ENCODE measurements at regions of chr11 and their contacts with region 1.

Region 1: GRCh38 chr11:4187055-4187988 is 92.7 kb downstream of the RRM1 start:
- DNase-seq: peak; percentile 52
- ATAC-seq: peak; percentile 94
- H3K4me3 ChIP-seq: peak overlapping the region; percentile 58 to 66
- H3K27ac ChIP-seq: 0 out of 2 replicates have a peak overlapping the region, but pooled peaks have one; percentile 25
- H3K4me1 ChIP-seq: no peaks in the 10 kb centered on the region
- H3K27me3 ChIP-seq: peaks cover 6% of the 10 kb centered on the region; the same call in 1 of the 2 replicates
- CTCF ChIP-seq: peak; percentile 99

Region 2: GRCh38 chr11:4065601-4066377 is 121.5 kb before region 1 on chr11:
- CTCF ChIA-PET with region 1: no interaction called
- POLR2A ChIA-PET with region 1: no interaction called
- in situ Hi-C with region 1: no loop called
- intact Hi-C with region 1: no loop called
- DNase-seq: no peak
- ATAC-seq: no peak
- H3K4me3 ChIP-seq: no peak overlapping the region
- H3K27ac ChIP-seq: no peak overlapping the region
- H3K4me1 ChIP-seq: no peaks in the 10 kb centered on the region
- H3K27me3 ChIP-seq: no peaks in the 10 kb centered on the region
- CTCF ChIP-seq: no peak

Region 3: DNA sequence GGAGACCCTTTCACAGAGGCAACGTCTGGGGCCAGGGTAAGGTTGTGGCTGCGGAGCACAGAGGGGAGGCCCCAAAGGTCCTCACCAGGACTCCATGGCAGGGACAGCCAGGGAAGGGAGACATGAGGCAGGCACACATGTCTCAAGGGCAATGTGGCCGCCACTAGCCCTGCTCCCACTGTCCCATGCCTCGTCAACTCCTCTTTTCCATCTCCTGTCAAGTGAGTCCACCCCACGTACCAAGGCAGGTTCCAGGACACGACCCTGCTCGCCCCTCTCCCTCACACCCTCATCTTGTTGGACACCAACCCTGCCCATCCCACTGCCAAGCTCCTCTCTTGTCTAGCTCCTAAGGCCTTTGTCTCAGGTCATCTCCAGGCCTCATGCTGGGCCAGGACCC is 19.6 kb before region 1 on chr11:
- CTCF ChIA-PET with region 1: no interaction called
- POLR2A ChIA-PET with region 1: no interaction called
- in situ Hi-C with region 1: no loop called
- intact Hi-C with region 1: no loop called
- DNase-seq: no peak
- ATAC-seq: peak; percentile 30; the same call in 1 of the 2 replicates
- H3K4me3 ChIP-seq: no peak overlapping the region
- H3K27ac ChIP-seq: no peak overlapping the region
- H3K4me1 ChIP-seq: no peaks in the 10 kb centered on the region
- H3K27me3 ChIP-seq: no peaks in the 10 kb centered on the region
- CTCF ChIP-seq: no peak

Region 4: GRCh38 chr11:4393209-4393857 is 206.0 kb after region 1 on chr11 and contains the start of gene TRIM21:
- CTCF ChIA-PET with region 1: no interaction called
- POLR2A ChIA-PET with region 1: no interaction called
- in situ Hi-C with region 1: no loop called
- intact Hi-C with region 1: no loop called
- DNase-seq: peak; percentile 83
- ATAC-seq: peak; percentile 100
- H3K4me3 ChIP-seq: peak within 1 kb of the TSS; percentile 81 to 91
- H3K27ac ChIP-seq: peak within 1 kb of the TSS; percentile 90
- H3K4me1 ChIP-seq: peaks cover 7% of the 10 kb centered on the region
- H3K27me3 ChIP-seq: no peaks in the 10 kb centered on the region
- CTCF ChIP-seq: no peak
- total RNA-seq, gene TRIM21: 31.7 TPM

Region 5: GRCh38 chr11:4493480-4493818 is 306.1 kb after region 1 on chr11:
- CTCF ChIA-PET with region 1: interaction called, 38 read pairs
- POLR2A ChIA-PET with region 1: no interaction called
- in situ Hi-C with region 1: no loop called
- intact Hi-C with region 1: loop called (anchors 1 kb)
- DNase-seq: no peak
- ATAC-seq: no peak
- H3K4me3 ChIP-seq: no peak overlapping the region
- H3K27ac ChIP-seq: no peak overlapping the region
- H3K4me1 ChIP-seq: no peaks in the 10 kb centered on the region
- H3K27me3 ChIP-seq: peaks cover 21% of the 10 kb centered on the region
- CTCF ChIP-seq: peak; percentile 74

Region 6: GRCh38 chr11:4539603-4540219 is 352.4 kb after region 1 on chr11:
- CTCF ChIA-PET with region 1: interaction called, 25 read pairs
- POLR2A ChIA-PET with region 1: no interaction called
- in situ Hi-C with region 1: no loop called
- intact Hi-C with region 1: loop called (anchors 1 kb)
- DNase-seq: peak; percentile 17
- ATAC-seq: peak; percentile 96
- H3K4me3 ChIP-seq: no peak overlapping the region
- H3K27ac ChIP-seq: no peak overlapping the region
- H3K4me1 ChIP-seq: no peaks in the 10 kb centered on the region
- H3K27me3 ChIP-seq: peaks cover 5% of the 10 kb centered on the region
- CTCF ChIP-seq: peak; percentile 86

Region 7: DNA sequence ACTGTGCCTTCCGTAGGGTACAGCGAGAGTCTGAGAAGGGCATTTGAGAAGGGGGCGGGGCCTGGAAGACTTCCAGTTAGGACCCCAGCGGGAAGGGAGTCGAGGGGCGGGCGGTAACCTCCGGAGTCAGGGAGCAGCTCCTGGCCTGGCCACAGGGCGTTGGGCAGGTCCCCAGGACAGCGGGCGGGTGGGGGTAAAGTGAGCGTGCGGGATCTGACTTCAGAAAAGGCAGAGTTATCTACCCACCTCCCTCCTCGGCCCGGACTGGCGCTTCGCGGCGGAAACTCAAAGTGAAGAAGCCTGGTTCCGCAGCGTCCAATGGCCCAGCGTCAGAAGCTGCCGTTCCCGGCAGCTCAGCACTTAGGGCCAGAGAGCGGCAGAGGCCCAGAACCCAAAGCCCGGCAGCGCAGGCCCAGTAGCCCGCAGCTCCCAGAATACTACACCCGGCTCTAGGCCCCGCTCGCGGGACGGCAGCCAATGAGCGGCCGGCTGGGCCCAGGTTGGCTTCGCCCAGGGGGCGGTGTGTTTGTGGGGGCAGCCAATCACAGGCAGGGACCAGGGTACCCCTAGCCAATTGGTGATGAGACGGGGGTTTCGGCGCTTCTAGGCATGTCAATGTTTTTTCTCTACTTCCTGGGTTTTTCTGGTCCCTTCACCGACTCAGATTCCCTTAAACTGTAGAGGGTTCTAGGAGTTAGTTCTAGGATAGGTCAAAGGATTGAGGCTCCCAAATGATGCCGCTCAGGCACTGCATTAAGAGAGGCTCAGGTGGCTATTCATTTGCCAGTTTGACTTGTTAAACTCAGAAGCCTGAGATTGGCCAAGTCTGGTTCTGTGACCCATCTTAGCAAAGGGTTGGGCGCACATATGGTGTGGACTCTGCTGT is 420.7 kb after region 1 on chr11 and contains the start of gene TRIM68:
- CTCF ChIA-PET with region 1: no interaction called
- POLR2A ChIA-PET with region 1: no interaction called
- in situ Hi-C with region 1: no loop called
- intact Hi-C with region 1: loop called (anchors 10 kb)
- DNase-seq: peak; percentile 85
- ATAC-seq: peak; percentile 100
- H3K4me3 ChIP-seq: peak within 1 kb of the TSS; percentile 67 to 79
- H3K27ac ChIP-seq: peak within 1 kb of the TSS; percentile 80
- H3K4me1 ChIP-seq: peaks cover 10% of the 10 kb centered on the region; the same call in 1 of the 2 replicates
- H3K27me3 ChIP-seq: no peaks in the 10 kb centered on the region; the same call in 1 of the 2 replicates
- CTCF ChIP-seq: no peak
- total RNA-seq, gene TRIM68: 18.5 TPM

Region 8: DNA sequence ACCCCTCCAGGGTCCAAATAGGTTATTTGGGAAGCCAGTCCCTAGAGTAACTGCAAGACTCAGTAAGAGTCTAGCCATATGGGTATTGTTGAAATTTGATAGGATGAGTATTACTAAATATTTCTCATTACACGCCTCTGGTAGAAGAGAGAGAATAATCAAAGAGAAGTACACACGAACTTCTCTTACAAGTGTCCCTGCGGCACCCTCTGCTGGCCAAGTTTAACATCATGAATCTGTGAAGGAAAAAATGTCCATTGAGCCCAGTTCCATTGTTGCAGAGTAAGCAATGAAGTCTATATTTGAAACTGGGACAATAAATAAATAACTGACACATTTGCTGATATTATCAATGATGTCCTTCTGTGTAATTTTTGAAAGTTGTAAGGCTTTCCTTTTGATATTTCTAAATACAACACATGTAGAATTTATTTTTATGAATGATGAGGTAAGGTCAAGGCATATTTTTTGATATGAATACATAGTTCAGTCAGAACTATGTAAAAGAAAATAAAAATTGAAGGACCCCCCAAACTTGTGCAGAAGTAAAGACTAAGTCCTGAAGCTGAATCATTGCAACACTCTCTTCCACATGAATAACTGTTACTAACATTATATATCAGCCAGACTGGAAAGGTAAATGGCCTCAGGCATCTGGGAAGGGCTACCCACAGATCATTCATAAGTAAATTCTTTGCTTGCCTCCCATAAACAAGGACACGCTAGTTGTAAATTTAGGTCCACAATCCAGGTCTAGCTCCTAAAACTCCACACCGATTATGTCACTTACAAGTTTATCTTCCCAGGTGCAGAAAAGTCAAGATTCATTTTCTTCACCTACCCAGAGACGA is 817.3 kb after region 1 on chr11:
- CTCF ChIA-PET with region 1: no interaction called
- POLR2A ChIA-PET with region 1: no interaction called
- in situ Hi-C with region 1: no loop called
- intact Hi-C with region 1: loop called (anchors 10 kb)
- DNase-seq: peak; percentile 52
- ATAC-seq: peak; percentile 83
- H3K4me3 ChIP-seq: no peak overlapping the region
- H3K27ac ChIP-seq: no peak overlapping the region
- H3K4me1 ChIP-seq: no peaks in the 10 kb centered on the region
- H3K27me3 ChIP-seq: no peaks in the 10 kb centered on the region; the same call in 1 of the 2 replicates
- CTCF ChIP-seq: peak; percentile 81

Region 9: DNA sequence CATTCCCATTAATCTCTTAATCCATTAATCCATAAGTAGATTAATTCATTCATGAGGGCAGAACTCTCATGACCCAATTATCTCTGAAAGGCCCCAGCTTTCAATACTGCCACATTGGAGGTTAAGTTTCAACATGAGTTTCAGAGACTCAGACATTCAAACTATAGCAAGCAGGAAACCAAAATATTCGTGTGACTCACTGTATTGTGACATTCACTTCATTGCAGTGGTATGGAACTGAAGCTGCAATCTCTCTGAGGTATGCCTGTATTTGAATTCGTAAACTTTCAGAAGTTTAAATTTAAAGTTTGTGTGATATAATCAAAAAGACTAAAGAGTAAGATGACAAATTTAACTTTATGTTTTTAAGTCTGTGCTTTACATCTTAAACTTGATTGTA is 856.1 kb after region 1 on chr11:
- CTCF ChIA-PET with region 1: no interaction called
- POLR2A ChIA-PET with region 1: no interaction called
- in situ Hi-C with region 1: no loop called
- intact Hi-C with region 1: no loop called
- DNase-seq: no peak
- ATAC-seq: no peak
- H3K4me3 ChIP-seq: no peak overlapping the region
- H3K27ac ChIP-seq: no peak overlapping the region
- H3K4me1 ChIP-seq: no peaks in the 10 kb centered on the region
- H3K27me3 ChIP-seq: no peaks in the 10 kb centered on the region
- CTCF ChIP-seq: no peak

Region 10: GRCh38 chr11:5280582-5281102 is 1093.3 kb after region 1 on chr11:
- CTCF ChIA-PET with region 1: no interaction called
- POLR2A ChIA-PET with region 1: no interaction called
- in situ Hi-C with region 1: no loop called
- intact Hi-C with region 1: loop called (anchors 10 kb)
- DNase-seq: peak; percentile 100
- ATAC-seq: peak; percentile 99
- H3K4me3 ChIP-seq: no peak overlapping the region
- H3K27ac ChIP-seq: no peak overlapping the region
- H3K4me1 ChIP-seq: peaks cover 7% of the 10 kb centered on the region; the same call in 1 of the 2 replicates
- H3K27me3 ChIP-seq: no peaks in the 10 kb centered on the region
- CTCF ChIP-seq: no peak